Activated CD4-positive, alpha-beta T cell treated with anti-CD3 and anti-CD28 coated beads for 36 hours (primary cell): ENCODE measurements at regions of chr3 and their contacts with region 1.

Region 1: GRCh38 chr3:122609798-122610559 is 32.5 kb downstream of the PARP15 start:
- DNase-seq: peak; percentile 27
- ATAC-seq: peak; percentile 95
- H3K4me3 Mint-ChIP-seq: peak overlapping the region; percentile 25
- H3K27ac Mint-ChIP-seq: peak overlapping the region; percentile 85
- H3K4me1 Mint-ChIP-seq: peaks cover 24% of the 10 kb centered on the region
- H3K27me3 Mint-ChIP-seq: no peaks in the 10 kb centered on the region

Region 2: GRCh38 chr3:122146466-122146865 is 463.5 kb before region 1 on chr3:
- CTCF ChIA-PET with region 1: no interaction called
- POLR2A ChIA-PET with region 1: no interaction called
- intact Hi-C with region 1: loop called in 1 of 2 experiments (anchors 1 kb)
- DNase-seq: peak; percentile 88
- ATAC-seq: peak; percentile 99
- H3K4me3 Mint-ChIP-seq: no peak overlapping the region
- H3K27ac Mint-ChIP-seq: peak overlapping the region; percentile 83
- H3K4me1 Mint-ChIP-seq: peaks cover 32% of the 10 kb centered on the region
- H3K27me3 Mint-ChIP-seq: peaks cover 2% of the 10 kb centered on the region

Region 3: GRCh38 chr3:122484985-122485384 is 125.0 kb before region 1 on chr3:
- CTCF ChIA-PET with region 1: no interaction called
- POLR2A ChIA-PET with region 1: no interaction called
- intact Hi-C with region 1: loop called in 1 of 2 experiments (anchors 1 kb)
- DNase-seq: no peak
- ATAC-seq: no peak
- H3K4me3 Mint-ChIP-seq: no peak overlapping the region
- H3K27ac Mint-ChIP-seq: no peak overlapping the region
- H3K4me1 Mint-ChIP-seq: peaks cover 69% of the 10 kb centered on the region
- H3K27me3 Mint-ChIP-seq: no peaks in the 10 kb centered on the region

Region 4: GRCh38 chr3:122533931-122534334 is 76.0 kb before region 1 on chr3:
- CTCF ChIA-PET with region 1: no interaction called
- POLR2A ChIA-PET with region 1: no interaction called
- intact Hi-C with region 1: loop called in 1 of 2 experiments (anchors 2 kb)
- DNase-seq: peak; percentile 67
- ATAC-seq: peak; percentile 99
- H3K4me3 Mint-ChIP-seq: no peak overlapping the region
- H3K27ac Mint-ChIP-seq: no peak overlapping the region
- H3K4me1 Mint-ChIP-seq: peaks cover 34% of the 10 kb centered on the region
- H3K27me3 Mint-ChIP-seq: no peaks in the 10 kb centered on the region

Region 5: GRCh38 chr3:122576174-122576940 is 33.6 kb before region 1 on chr3:
- CTCF ChIA-PET with region 1: interaction called, 4 read pairs
- POLR2A ChIA-PET with region 1: no interaction called
- intact Hi-C with region 1: loop called (anchors 1 kb)
- DNase-seq: peak; percentile 78
- ATAC-seq: peak; percentile 90
- H3K4me3 Mint-ChIP-seq: peak overlapping the region; percentile 24
- H3K27ac Mint-ChIP-seq: peak overlapping the region; percentile 87
- H3K4me1 Mint-ChIP-seq: peaks cover 58% of the 10 kb centered on the region
- H3K27me3 Mint-ChIP-seq: no peaks in the 10 kb centered on the region

Region 6: GRCh38 chr3:122642935-122643334 is 33.0 kb after region 1 on chr3:
- CTCF ChIA-PET with region 1: no interaction called
- POLR2A ChIA-PET with region 1: no interaction called
- intact Hi-C with region 1: no loop called
- DNase-seq: no peak
- ATAC-seq: peak; percentile 64
- H3K4me3 Mint-ChIP-seq: no peak overlapping the region
- H3K27ac Mint-ChIP-seq: no peak overlapping the region
- H3K4me1 Mint-ChIP-seq: peaks cover 6% of the 10 kb centered on the region
- H3K27me3 Mint-ChIP-seq: peaks cover 3% of the 10 kb centered on the region

Region 7: GRCh38 chr3:122668930-122669730 is 59.2 kb after region 1 on chr3:
- CTCF ChIA-PET with region 1: no interaction called
- POLR2A ChIA-PET with region 1: interaction called, 6 read pairs
- intact Hi-C with region 1: loop called in 1 of 2 experiments (anchors 1 kb)
- DNase-seq: peak; percentile 62
- ATAC-seq: peak; percentile 98
- H3K4me3 Mint-ChIP-seq: no peak overlapping the region
- H3K27ac Mint-ChIP-seq: peak overlapping the region; percentile 69
- H3K4me1 Mint-ChIP-seq: peaks cover 15% of the 10 kb centered on the region
- H3K27me3 Mint-ChIP-seq: no peaks in the 10 kb centered on the region